ENCODE measurements at regions of chr2 and their contacts with region 1.

Region 1: DNA sequence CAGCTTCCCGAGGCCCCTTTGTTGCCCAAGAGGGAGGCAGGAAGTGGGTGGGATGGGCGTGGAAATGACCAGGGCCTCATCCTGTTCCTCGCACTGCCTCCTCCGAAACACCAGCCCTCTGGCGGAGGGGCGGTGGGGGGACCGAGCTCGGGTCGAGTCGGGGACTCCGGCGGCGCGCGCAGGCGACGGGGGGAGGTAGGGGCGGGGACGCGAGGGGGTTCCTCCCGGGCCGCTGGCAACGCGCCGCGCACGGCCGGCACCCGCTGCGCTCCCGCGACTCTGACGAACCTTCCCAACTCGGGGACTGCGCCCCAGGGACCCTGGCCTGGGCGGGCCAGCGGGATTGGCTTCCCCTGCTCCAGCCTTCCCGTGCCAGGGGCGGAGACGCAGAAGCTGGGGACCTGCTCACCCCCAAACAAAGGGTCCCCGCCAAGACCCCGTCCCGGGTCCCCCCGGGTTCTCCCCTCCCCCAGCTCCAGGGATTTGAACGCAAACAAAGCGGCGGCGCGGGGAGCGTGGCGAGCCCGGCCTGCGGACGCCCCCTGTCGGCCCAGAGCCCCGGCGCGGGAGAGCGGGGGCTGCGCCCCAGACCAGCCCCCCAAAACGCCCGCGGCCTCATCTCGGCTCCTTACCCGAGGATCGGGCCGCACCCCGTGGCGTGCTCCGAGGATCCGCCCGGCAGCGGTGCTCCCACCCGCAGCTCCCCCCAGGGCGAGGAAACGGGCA is 1.2 kb downstream of the SEMA4C start:
- DNase-seq: peak in 9 of 10 donors; percentile 56 to 96 (median 77)

Region 2: GRCh38 chr2:96618604-96619283 is 250.0 kb before region 1 on chr2:
- intact Hi-C with region 1: no loop called
- DNase-seq: no peak

Region 3: GRCh38 chr2:96647354-96648235 is 221.1 kb before region 1 on chr2:
- intact Hi-C with region 1: no loop called
- DNase-seq: peak in 1 of 10 donors; percentile 10

Region 4: DNA sequence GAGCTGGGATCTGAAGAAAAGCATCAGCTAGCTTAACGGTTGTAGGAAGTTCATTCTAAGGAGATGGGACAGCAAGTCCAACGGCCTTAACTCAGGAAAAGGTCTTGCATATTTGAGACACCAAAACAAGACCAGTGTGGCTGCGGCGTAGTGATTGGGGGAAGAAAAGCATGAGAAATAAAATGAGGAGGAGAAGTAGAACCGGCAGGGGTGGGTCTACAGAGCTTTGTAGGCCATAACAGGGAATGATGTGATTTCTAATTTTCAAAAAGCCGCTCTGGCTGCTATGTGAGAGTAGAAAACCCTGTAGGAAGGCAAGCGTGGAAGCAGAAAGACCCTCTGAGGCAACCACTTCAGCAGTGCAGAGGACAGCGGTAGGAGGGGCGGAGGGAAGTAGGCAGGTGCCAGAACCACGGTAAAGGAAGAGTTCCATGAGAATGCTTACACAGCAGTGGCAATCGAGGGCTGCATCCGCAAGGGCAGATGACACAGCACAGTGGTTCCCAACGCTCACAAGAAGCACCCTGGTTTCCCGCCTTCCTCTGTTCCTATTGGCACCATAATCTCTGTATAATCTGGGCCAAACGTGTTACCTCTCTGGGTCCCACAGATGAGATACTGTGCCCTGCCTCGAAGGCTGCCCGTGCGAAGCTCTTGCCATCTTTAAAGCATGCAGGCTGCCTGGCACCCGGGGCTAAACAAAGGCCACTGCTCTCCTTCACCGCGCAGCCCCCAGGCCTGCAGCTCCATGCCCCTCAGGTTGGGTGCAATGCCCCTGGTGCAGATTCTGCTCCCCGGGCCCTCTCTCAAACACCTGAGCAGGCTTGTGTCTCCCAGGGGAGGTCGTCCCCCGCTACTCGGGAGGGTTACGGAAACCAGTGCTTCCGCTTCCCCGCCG is 11.7 kb before region 1 on chr2:
- intact Hi-C with region 1: loop called (anchors 1 kb)
- DNase-seq: peak in 1 of 10 donors; percentile 74

Region 5: DNA sequence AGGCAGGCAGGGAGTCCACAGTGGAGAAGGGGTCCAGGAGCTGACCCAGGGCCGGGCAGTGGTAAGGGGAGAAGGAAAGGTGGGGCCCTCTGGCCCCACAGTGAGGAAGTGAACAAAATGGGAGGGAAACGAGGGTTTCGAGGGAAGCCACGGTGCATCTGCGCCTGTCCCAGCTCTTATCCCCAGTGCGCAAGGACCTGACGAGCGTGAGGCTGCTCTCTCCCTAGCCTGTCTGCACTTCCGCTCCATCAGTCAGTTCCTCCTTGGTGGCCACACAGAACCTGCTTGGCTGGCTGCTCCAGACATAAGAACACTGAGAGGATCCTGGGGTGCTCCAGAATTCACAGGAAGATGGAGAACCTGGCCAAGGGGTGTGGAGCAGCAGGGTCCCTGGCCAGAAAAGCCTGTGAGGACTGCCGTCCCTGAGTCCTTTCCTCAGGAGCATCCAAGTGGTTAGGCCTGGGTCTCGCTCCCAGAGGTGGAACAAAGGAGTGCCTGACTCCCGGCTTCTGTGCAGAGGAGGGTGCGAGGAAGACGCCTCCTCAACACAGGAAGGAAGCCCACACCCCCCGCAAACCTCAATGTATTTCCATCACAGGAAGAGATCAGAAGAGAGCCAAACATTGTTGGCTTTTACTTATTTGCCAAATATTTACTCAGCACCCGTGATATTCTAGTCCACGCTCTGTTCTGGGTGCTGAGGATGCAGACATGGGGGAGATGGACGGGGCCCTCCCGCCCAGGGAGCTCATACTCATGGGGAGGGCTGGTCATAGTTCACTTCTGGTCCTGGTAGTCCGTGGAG is 44.9 kb after region 1 on chr2:
- intact Hi-C with region 1: loop called (anchors 5 kb)
- DNase-seq: peak in 6 of 10 donors; percentile 50 to 93 (median 69)

Region 6: GRCh38 chr2:97095661-97096060 is 226.9 kb after region 1 on chr2:
- intact Hi-C with region 1: loop called (anchors 10 kb)
- DNase-seq: no peak

Region 7: GRCh38 chr2:98649135-98649991 is 1780.6 kb after region 1 on chr2:
- intact Hi-C with region 1: no loop called
- DNase-seq: peak in 9 of 10 donors; percentile 47 to 95 (median 83)